Aorta (tissue), 5 donors: ENCODE measurements at regions of chr2 and their contacts with region 1.

Region 1: DNA sequence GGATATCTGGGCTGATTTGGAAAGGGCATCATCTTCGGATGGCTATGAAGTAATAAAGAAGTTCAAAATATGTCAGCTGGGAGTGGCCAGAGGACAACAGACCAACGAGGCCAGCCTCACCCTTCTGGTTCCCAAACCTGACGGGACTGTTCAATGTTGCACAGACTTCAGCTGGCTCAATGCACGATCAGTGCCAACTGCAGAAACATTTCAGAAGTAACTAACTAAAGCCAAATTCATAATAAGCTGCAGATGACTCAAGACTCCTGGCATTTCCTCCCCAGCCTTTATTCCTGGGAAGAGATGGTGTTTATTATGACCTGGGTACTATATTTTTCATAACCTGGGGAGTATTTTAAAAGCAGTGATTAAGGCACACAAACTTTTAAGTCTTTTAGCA is 3.8 kb upstream of the ATP6V1C2 start:
- DNase-seq: peak in 1 of 2 donors; percentile 60
- ATAC-seq: peak; percentile 75
- H3K4me3 ChIP-seq: no peak overlapping the region
- H3K27ac ChIP-seq: peak overlapping the region; percentile 60 to 78
- H3K4me1 ChIP-seq: no peaks in the 10 kb centered on the region
- H3K27me3 ChIP-seq: no peaks in the 10 kb centered on the region

Region 2: GRCh38 chr2:10812362-10813162 is 94.9 kb after region 1 on chr2 and contains the start of gene PDIA6:
- intact Hi-C with region 1: loop called in 1 of 2 experiments (anchors 5 kb)
- DNase-seq: peak; percentile 98 to 99
- ATAC-seq: peak; percentile 99
- H3K4me3 ChIP-seq: peak within 1 kb of the TSS; percentile 88 to 94
- H3K27ac ChIP-seq: peak within 1 kb of the TSS in 1 of 2 donors; percentile 37
- H3K4me1 ChIP-seq: no peaks in the 10 kb centered on the region
- H3K27me3 ChIP-seq: no peaks in the 10 kb centered on the region
- total RNA-seq, gene PDIA6: 118 to 128 TPM